ENCODE measurements at regions of chr14 and their contacts with region 1.

Region 1: GRCh38 chr14:92680781-92681650 is 67.4 kb downstream of the LGMN start:
- DNase-seq: peak; percentile 50 to 83
- H3K4me3 ChIP-seq: no peak overlapping the region
- H3K27ac ChIP-seq: no peak overlapping the region
- H3K4me1 ChIP-seq: peaks cover 0 to 3% (median 0%) of the 10 kb centered on the region in 4 experiments; a peak in 1 of 7 replicates
- H3K27me3 ChIP-seq: no peaks in the 10 kb centered on the region
- CTCF ChIP-seq: peak; percentile 90 to 97 (median 94)
- EP300 ChIP-seq: no peak
- POLR2A ChIP-seq: no peak
- RAD21 ChIP-seq: peak; percentile 95

Region 2: GRCh38 chr14:92596331-92596911 is 84.6 kb before region 1 on chr14:
- CTCF ChIA-PET with region 1: interaction called, 31 read pairs
- POLR2A ChIA-PET with region 1: no interaction called
- DNase-seq: no peak
- H3K4me3 ChIP-seq: no peak overlapping the region
- H3K27ac ChIP-seq: no peak overlapping the region
- H3K4me1 ChIP-seq: no peaks in the 10 kb centered on the region
- H3K27me3 ChIP-seq: no peaks in the 10 kb centered on the region; a peak in 1 of 7 replicates
- CTCF ChIP-seq: peak; percentile 56 to 68 (median 56)
- EP300 ChIP-seq: no peak
- POLR2A ChIP-seq: no peak
- RAD21 ChIP-seq: peak; percentile 59 to 71

Region 3: DNA sequence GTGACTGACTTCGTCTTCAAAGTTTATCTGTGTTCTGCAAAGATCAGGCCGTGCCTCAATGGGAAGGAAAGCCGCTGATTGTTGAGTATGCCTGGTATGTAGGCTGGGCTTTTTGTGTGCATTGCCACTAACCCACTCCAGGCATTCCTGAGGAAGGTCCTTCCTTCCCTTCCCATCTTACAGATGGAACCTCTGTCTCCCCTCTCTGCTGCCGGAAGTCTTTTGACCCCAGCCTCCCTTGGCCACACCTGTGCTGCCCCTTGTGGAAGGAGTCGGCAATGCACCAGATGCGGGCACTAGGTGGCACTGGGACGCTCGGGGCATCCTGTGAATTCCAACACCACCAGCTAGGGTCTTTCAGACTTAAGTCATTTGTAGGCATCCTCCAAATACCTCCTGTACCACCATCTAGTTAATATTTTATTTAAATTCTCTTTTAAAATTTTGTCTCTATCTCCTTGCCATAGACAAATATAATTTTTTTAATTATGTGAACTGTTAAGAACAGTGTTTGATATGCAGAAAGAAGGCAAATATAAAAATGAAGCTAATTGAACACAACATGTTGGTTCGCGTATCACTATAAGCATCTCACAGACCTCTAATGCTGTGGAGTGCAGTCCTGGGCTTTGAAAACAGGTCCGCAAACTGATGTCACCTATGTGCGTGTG is 67.9 kb before region 1 on chr14:
- CTCF ChIA-PET with region 1: interaction called, 17 read pairs
- POLR2A ChIA-PET with region 1: no interaction called
- DNase-seq: peak; percentile 51 to 97
- H3K4me3 ChIP-seq: no peak overlapping the region
- H3K27ac ChIP-seq: no peak overlapping the region
- H3K4me1 ChIP-seq: no peaks in the 10 kb centered on the region
- H3K27me3 ChIP-seq: no peaks in the 10 kb centered on the region
- CTCF ChIP-seq: peak; percentile 98 to 100 (median 99)
- EP300 ChIP-seq: 0 out of 3 replicates have a peak, but pooled peaks of 1 of the 2 experiments have one; percentile 24
- POLR2A ChIP-seq: no peak
- RAD21 ChIP-seq: peak; percentile 80 to 86

Region 4: GRCh38 chr14:92630367-92630766 is 50.6 kb before region 1 on chr14:
- CTCF ChIA-PET with region 1: interaction called, 14 read pairs
- POLR2A ChIA-PET with region 1: no interaction called
- DNase-seq: no peak
- H3K4me3 ChIP-seq: no peak overlapping the region
- H3K27ac ChIP-seq: no peak overlapping the region
- H3K4me1 ChIP-seq: peaks cover 0 to 19% (median 8%) of the 10 kb centered on the region in 4 experiments; a peak in 3 of 7 replicates
- H3K27me3 ChIP-seq: no peaks in the 10 kb centered on the region; a peak in 1 of 7 replicates
- CTCF ChIP-seq: no peak
- EP300 ChIP-seq: no peak
- POLR2A ChIP-seq: no peak
- RAD21 ChIP-seq: no peak

Region 5: GRCh38 chr14:92651106-92651757 is 29.8 kb before region 1 on chr14:
- CTCF ChIA-PET with region 1: interaction called, 17 read pairs
- POLR2A ChIA-PET with region 1: no interaction called
- DNase-seq: no peak
- H3K4me3 ChIP-seq: no peak overlapping the region
- H3K27ac ChIP-seq: no peak overlapping the region
- H3K4me1 ChIP-seq: no peaks in the 10 kb centered on the region
- H3K27me3 ChIP-seq: no peaks in the 10 kb centered on the region
- CTCF ChIP-seq: no peak
- EP300 ChIP-seq: no peak
- POLR2A ChIP-seq: no peak
- RAD21 ChIP-seq: no peak

Measured in H1 (cell line).